Adrenal gland (tissue), 19 donors: ENCODE measurements at regions of chr16 and their contacts with region 1.

Region 1: DNA sequence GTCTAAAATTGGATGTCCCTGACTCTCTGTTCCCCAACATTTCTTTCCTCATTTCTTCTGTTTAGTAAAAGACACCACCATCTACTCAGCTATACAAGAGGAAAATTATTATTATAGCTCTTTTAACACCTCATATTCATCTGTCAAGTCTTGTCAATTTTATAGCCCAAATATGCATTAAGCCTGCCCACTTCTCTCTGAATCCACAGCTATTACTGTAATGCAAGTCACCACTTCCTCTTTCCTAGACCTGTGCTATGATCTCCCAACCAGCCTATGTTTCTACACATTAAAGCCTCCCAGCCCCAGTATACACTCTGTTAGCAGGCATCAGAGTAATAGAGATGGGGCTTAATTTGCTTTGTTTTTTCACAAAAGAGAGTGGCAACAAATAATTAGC is 252.9 kb downstream of the GRIN2A start:
- DNase-seq: no peak
- H3K4me3 ChIP-seq: no peak overlapping the region
- H3K27ac ChIP-seq: no peak overlapping the region
- H3K4me1 ChIP-seq: no peaks in the 10 kb centered on the region
- H3K27me3 ChIP-seq: no peaks in the 10 kb centered on the region
- CTCF ChIP-seq: no peak
- POLR2A ChIP-seq: no peak

Region 2: DNA sequence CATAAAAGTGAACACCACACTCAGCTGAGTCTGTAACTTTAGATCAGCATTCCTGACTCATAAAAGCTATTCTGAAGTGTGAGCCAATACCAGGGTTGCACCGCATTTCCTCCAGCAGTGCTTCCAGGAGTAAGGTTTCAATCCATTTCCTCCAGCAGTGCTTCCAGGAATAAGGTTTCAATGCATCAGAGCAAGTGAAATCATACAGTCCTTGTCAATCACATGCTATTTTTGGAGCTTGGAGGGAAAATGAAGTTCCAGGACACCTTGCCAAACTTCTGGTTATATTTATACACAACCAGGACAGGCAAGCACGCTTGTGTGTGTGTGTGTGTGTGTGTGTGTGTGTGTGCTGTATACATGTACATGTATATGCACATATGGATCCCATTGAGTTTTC is 74.6 kb before region 1 on chr16:
- intact Hi-C with region 1: no loop called
- DNase-seq: no peak
- H3K4me3 ChIP-seq: no peak overlapping the region
- H3K27ac ChIP-seq: no peak overlapping the region
- H3K4me1 ChIP-seq: no peaks in the 10 kb centered on the region
- H3K27me3 ChIP-seq: no peaks in the 10 kb centered on the region
- CTCF ChIP-seq: no peak
- POLR2A ChIP-seq: no peak

Region 3: DNA sequence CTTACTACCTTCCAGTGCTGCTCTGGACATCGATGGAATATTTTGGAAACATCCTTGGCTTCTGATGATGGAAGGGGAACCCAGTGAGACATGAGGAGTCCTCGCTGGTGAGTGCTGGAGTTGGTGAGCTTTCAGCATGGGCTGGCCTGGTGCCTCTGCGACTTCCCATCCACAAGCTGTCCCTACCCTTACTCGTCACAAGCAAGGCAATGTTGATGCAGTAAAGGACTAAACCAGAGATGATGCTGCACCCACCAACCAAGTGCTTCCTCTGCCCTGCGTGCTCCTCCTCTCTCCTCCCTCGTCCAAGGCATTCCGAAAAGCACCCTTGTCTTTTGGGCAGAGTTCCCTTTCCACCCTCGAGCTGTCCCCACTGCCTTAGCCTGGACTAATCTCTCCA is 98.2 kb after region 1 on chr16:
- intact Hi-C with region 1: no loop called
- DNase-seq: no peak
- H3K4me3 ChIP-seq: no peak overlapping the region
- H3K27ac ChIP-seq: no peak overlapping the region
- H3K4me1 ChIP-seq: no peaks in the 10 kb centered on the region
- H3K27me3 ChIP-seq: no peaks in the 10 kb centered on the region
- CTCF ChIP-seq: no peak
- POLR2A ChIP-seq: no peak

Region 4: DNA sequence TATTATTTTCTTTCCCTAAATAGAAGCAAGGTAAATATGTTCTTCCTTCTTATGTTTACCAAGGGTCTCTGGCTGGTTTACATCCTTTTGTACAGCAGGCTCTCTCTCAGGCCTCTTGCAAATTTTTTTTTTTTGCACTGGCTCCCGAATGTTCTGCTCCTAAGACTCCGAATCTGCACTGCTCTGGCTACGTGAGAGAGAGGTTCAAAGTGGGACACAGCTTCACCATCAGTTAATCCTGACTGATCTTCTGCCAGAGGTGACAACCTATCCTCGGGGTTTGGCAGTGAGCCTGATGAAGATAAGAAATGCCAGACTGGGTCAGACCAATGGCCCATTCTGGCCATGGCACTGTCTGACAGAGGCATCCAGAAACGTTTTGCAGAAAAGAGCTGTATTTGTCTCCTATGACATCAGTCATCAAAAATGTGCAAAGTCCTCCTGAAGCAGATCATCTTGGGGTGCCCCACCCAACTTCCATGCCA is 116.0 kb after region 1 on chr16:
- intact Hi-C with region 1: loop called in 1 of 2 experiments (anchors 10 kb)
- DNase-seq: peak in 4 of 7 donors; percentile 11 to 72 (median 36)
- H3K4me3 ChIP-seq: no peak overlapping the region
- H3K27ac ChIP-seq: no peak overlapping the region
- H3K4me1 ChIP-seq: no peaks in the 10 kb centered on the region
- H3K27me3 ChIP-seq: no peaks in the 10 kb centered on the region
- CTCF ChIP-seq: no peak
- POLR2A ChIP-seq: no peak